ENCODE measurements at regions of chr6 and their contacts with region 1.

Region 1: GRCh38 chr6:134416418-134417154 is 98.7 kb upstream of the SGK1 start:
- DNase-seq: peak; percentile 60
- H3K4me3 ChIP-seq: no peak overlapping the region
- H3K27me3 ChIP-seq: no peaks in the 10 kb centered on the region
- CTCF ChIP-seq: no peak

Region 2: DNA sequence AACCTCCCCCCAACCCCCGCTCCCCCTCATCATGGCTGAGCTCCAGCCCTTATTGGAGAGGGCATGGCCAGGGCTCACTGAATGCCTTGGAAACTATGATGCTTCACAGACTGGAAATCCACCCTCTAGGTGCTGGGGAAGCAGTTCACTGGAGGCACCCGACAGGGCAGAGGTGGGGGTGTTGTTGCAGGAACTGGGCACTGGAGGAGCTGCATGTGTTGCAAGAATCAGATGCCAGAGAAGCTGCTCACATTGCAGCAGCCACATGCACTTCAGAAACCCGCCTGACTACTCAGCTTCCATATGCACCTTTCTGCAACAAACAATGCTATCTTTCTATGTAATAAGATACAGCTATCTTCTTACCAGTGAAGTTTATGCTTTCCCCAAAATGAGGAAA is 471.4 kb before region 1 on chr6:
- CTCF ChIA-PET with region 1: no interaction called
- POLR2A ChIA-PET with region 1: interaction called, 11 read pairs
- DNase-seq: no peak
- H3K4me3 ChIP-seq: no peak overlapping the region
- H3K27me3 ChIP-seq: peaks cover 1% of the 10 kb centered on the region
- CTCF ChIP-seq: no peak

Measured in BJ (cell line).